Left ventricle myocardium inferior (tissue), 1 donor: ENCODE measurements at regions of chr12 and their contacts with region 1.

Region 1: GRCh38 chr12:101414533-101415119 is 7.1 kb upstream of the ARL1 start:
- DNase-seq: no peak
- H3K4me3 ChIP-seq: no peak overlapping the region
- H3K27ac ChIP-seq: no peak overlapping the region
- H3K4me1 ChIP-seq: no peaks in the 10 kb centered on the region
- H3K27me3 ChIP-seq: peaks cover 3% of the 10 kb centered on the region
- CTCF ChIP-seq: peak; percentile 64

Region 2: GRCh38 chr12:101490286-101490920 is 75.8 kb after region 1 on chr12:
- intact Hi-C with region 1: no loop called
- DNase-seq: no peak
- H3K4me3 ChIP-seq: no peak overlapping the region
- H3K27ac ChIP-seq: no peak overlapping the region
- H3K4me1 ChIP-seq: no peaks in the 10 kb centered on the region
- H3K27me3 ChIP-seq: no peaks in the 10 kb centered on the region
- CTCF ChIP-seq: peak; percentile 60

Region 3: DNA sequence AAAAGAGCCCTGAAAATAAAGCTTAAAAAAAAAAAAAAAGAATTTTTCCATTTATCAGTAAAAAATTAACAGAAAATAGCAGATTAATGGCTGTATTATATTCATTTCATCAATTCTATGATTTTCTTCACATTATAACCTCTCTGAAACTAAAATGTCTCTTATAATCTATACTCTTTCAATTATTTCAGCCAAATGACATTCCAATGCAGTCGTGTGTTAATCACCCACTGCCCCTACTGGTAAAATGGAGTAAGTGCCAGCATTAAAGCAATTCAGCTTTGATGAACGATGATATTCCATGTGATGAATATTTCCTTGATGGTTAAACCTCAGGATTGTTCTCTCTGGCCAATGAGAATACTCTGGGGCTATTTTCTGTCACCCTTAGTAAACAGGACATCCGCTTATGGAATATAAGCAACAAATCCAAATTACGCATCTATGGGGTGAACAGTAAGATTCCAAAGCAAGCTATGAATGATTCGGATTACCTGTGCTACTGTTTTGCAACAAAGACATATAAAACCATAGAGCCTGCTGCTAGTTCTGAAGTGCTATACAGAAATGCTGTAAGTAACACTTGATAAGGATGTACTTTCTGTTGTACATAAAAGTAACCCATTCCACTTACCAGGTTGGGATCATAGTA is 344.9 kb after region 1 on chr12:
- intact Hi-C with region 1: loop called (anchors 10 kb)
- DNase-seq: no peak
- H3K4me3 ChIP-seq: no peak overlapping the region
- H3K27ac ChIP-seq: no peak overlapping the region
- H3K4me1 ChIP-seq: peaks cover 5% of the 10 kb centered on the region
- H3K27me3 ChIP-seq: no peaks in the 10 kb centered on the region
- CTCF ChIP-seq: peak; percentile 74